ENCODE measurements at regions of chr15 and their contacts with region 1.

Region 1: DNA sequence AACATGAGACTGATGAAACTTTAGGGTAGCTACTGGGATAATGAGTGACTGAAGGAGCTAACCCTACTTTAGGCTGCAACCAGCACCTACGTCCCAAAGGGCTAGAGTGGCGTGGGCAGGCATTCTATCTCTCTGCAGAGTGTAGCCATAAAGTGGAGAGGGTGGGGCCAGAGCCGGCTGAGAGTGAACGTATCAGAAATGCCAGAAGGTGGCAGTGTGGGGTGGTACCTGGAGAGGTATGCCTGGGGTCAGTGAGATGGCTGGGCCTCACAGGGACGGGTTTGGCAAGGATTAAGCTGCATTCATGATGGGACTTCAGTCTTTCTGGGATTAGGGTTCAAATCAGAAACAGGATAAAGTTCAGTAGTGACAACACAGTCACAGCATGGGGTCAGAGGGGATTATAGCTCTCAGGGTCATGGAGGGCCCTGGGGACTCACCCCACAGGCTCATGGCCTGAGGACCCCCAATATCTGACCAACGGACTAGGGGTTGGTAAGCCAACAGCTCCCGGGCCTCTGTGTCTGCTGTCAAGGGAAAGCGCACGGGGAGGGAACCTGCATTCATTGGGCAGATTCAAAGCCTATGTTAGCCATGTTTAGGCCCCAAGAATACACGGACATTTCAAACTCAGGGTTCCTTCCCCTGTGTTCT is 86.5 kb upstream of the FOXB1 start:
- DNase-seq: peak; percentile 85
- H3K4me3 Mint-ChIP-seq: no peak overlapping the region
- H3K27ac Mint-ChIP-seq: no peak overlapping the region
- H3K4me1 Mint-ChIP-seq: peaks cover 26% of the 10 kb centered on the region
- H3K27me3 Mint-ChIP-seq: peaks cover 3% of the 10 kb centered on the region

Region 2: DNA sequence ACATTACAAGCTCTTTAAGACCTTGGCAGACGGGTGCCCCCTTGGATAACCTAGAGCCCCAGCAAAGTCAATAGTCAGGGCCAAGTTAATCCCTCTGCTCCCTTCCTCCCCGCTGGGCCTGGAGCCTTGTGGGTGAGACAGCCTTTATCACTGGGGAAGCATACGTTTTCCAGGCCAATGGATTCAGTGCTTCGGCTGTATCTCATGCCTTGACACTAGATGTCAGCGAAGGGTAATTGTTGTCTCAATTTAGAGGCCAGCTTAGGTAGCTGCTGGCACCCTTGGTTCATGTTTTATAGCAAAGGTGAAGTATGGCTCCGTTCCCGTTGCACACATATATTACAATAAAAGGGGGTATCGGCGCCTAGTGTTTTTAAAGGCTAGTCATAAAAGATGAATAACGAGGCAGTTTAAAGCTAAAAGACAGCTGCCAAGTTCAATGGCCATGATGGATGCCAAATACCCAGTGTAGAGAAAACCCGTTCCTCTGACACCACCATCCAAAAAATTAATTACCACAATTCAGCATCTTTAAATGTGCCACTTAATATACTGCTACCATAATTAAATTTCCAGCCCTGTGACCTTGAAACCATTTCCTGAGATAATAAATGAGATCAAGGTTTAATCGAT is 176.2 kb before region 1 on chr15:
- CTCF ChIA-PET with region 1: interaction called, 18 read pairs
- POLR2A ChIA-PET with region 1: no interaction called
- intact Hi-C with region 1: no loop called
- DNase-seq: no peak
- H3K4me3 Mint-ChIP-seq: no peak overlapping the region
- H3K27ac Mint-ChIP-seq: no peak overlapping the region
- H3K4me1 Mint-ChIP-seq: no peaks in the 10 kb centered on the region
- H3K27me3 Mint-ChIP-seq: peaks cover 4% of the 10 kb centered on the region

Region 3: DNA sequence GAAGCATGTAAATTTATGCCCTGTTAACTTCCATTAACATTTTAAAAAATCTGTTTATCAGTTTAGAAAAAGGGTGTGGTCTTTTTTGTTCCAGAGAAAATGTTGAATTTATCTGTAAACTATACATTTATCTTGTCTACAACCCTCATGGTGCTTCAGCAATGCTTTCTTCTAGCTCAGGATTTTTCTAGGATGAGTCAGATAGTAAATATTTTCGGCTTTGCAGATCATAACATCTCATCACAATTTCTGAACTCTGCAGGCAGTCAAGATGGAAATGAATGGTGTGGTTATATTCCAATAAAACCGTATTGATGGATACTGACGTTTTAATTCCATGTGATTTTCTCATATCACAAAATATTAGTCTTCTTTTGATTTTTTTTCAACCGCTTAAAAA is 16.0 kb after region 1 on chr15:
- CTCF ChIA-PET with region 1: interaction called, 13 read pairs
- POLR2A ChIA-PET with region 1: no interaction called
- intact Hi-C with region 1: no loop called
- DNase-seq: no peak
- H3K4me3 Mint-ChIP-seq: no peak overlapping the region
- H3K27ac Mint-ChIP-seq: no peak overlapping the region
- H3K4me1 Mint-ChIP-seq: no peaks in the 10 kb centered on the region
- H3K27me3 Mint-ChIP-seq: peaks cover 11% of the 10 kb centered on the region

Region 4: DNA sequence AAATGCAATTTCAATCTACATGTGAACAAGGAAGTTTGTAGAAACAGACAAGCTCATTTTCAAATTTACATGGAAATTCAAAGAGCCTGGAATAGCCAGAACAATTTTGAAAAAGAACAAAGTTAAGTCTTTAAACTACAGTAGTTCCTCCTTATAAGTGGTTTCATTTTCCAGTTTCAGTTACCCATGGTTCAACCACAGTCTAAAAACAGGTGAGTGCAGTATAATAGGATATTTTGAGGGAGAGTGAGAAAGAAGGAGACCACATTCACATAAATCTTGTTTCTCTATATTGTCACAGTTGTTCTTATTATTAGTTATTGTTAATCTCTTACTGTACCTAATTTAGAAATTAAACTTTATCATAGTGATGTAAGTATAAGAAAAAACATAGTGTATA is 40.7 kb after region 1 on chr15:
- CTCF ChIA-PET with region 1: no interaction called
- POLR2A ChIA-PET with region 1: no interaction called
- intact Hi-C with region 1: no loop called
- DNase-seq: no peak
- H3K4me3 Mint-ChIP-seq: no peak overlapping the region
- H3K27ac Mint-ChIP-seq: no peak overlapping the region
- H3K4me1 Mint-ChIP-seq: no peaks in the 10 kb centered on the region
- H3K27me3 Mint-ChIP-seq: peaks cover 8% of the 10 kb centered on the region

Region 5: GRCh38 chr15:60006203-60006862 is 88.7 kb after region 1 on chr15:
- CTCF ChIA-PET with region 1: interaction called, 20 read pairs
- POLR2A ChIA-PET with region 1: no interaction called
- intact Hi-C with region 1: no loop called
- DNase-seq: peak; percentile 87
- H3K4me3 Mint-ChIP-seq: peak overlapping the region; percentile 84
- H3K27ac Mint-ChIP-seq: peak overlapping the region; percentile 77
- H3K4me1 Mint-ChIP-seq: peaks cover 45% of the 10 kb centered on the region
- H3K27me3 Mint-ChIP-seq: peaks cover 85% of the 10 kb centered on the region

Region 6: DNA sequence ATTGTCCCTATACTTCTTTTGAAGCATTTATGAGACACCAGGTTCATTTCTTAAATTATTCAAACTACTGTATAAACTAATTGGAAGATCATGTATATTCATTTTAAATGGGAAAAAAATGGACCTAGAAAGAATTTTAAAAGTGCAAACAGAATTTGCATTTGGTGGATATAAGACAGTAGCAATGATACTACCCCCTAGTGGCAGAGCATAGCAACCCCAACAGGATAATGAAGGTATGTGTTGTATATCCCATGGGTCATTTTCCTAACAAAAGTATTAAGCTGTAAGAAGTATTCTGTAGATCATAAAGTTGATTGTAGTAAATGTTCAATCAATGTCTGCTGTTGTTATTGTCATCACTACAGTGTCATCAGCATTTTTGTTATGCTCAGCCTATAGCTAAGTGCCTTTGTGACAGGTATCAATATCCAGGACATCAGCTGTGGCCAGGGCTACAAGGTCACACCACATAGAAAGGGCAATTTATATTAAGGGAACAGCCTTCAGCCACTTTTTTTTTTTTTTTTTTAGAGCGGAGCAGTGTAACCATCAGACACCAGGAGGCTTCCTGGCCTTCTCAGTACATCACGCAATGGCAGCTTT is 262.3 kb after region 1 on chr15:
- CTCF ChIA-PET with region 1: interaction called, 79 read pairs
- POLR2A ChIA-PET with region 1: interaction called, 6 read pairs
- intact Hi-C with region 1: loop called (anchors 1 kb)
- DNase-seq: peak; percentile 21
- H3K4me3 Mint-ChIP-seq: no peak overlapping the region
- H3K27ac Mint-ChIP-seq: no peak overlapping the region
- H3K4me1 Mint-ChIP-seq: no peaks in the 10 kb centered on the region
- H3K27me3 Mint-ChIP-seq: peaks cover 21% of the 10 kb centered on the region

Region 7: DNA sequence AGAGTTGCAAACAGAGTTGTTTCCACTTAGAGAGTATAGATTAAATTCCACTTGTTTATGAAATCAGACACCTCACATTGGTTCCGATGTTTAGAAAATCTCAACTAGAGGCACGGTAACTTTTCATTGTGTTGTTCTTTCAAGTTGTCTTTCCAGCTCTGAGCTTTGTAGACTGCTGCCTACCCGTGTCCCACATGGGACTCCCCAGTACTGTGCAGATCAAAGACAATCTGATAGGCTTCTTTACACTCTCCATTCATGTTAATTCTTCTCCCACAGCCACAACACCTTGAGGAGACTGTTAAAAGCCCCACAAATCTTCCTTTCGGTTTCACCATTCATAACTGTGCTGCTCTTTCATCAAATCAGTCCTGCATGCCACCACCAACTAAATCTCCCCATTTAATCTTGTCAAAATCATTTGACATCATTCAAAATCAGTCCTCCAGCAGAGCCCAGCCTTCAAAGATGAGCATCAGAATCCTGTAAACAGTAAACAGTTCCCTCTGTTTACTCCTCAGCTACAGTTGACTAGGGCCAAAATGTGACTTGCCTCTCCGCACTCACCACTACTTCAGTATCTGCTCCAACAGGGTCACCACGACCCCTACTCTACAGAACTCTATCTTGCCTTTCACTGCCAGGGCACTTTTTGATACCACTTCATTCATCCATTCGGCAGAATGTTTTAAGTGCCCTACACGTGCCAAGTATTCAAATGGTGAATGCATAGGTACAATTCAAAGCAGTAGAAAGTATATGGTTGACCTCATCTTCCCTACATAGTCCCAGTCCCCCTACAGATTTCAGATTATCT is 471.8 kb after region 1 on chr15:
- CTCF ChIA-PET with region 1: no interaction called
- POLR2A ChIA-PET with region 1: no interaction called
- intact Hi-C with region 1: loop called (anchors 1 kb)
- DNase-seq: peak; percentile 63
- H3K4me3 Mint-ChIP-seq: peak overlapping the region; percentile 34
- H3K27ac Mint-ChIP-seq: peak overlapping the region; percentile 44
- H3K4me1 Mint-ChIP-seq: peaks cover 61% of the 10 kb centered on the region
- H3K27me3 Mint-ChIP-seq: no peaks in the 10 kb centered on the region

Region 8: DNA sequence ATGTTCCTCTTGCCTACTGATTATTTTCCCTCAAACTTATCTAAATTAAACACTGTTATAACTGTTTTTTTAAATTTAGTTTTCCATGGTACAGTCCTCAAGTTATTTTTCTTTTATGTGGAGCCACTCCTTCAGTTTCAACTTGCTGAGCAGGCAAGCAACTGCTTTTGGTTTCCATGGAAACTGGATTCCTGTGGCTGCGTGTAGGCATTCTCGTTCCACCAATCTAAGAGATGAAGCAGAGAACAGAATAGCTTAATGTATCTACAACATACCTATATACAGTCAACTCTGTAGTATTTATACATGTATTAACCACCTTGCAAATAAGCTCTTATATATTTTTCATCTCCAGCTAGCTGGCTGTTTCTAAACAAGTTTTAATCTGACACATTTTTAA is 505.9 kb after region 1 on chr15:
- CTCF ChIA-PET with region 1: no interaction called
- POLR2A ChIA-PET with region 1: no interaction called
- intact Hi-C with region 1: no loop called
- DNase-seq: peak; percentile 17
- H3K4me3 Mint-ChIP-seq: no peak overlapping the region
- H3K27ac Mint-ChIP-seq: no peak overlapping the region
- H3K4me1 Mint-ChIP-seq: peaks cover 19% of the 10 kb centered on the region
- H3K27me3 Mint-ChIP-seq: no peaks in the 10 kb centered on the region